Naive thymus-derived CD4-positive, alpha-beta T cell (primary cell): ENCODE measurements at regions of chr17 and their contacts with region 1.

Region 1: DNA sequence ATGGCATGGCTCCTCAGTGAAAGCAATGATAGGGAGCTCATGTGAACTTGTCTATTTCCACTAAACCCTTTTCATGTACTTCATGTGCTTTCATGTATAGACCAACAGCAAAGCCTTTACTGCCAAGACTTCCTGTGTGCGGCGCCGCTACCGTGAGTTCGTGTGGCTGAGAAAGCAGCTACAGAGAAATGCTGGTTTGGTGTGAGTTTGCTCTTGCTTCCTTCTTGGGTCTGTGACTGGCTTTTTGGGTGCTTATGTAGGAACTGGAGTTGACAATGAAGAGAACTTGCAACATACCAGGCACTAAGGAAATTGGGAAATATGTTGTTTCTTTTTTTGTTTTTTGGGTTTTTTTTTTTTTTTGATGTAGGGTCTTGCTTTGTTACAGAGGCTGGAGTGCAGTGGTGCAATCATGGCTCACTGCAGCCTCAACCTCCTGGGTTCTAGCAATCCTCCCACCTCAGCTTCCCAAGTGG is 5.7 kb downstream of the SNX11 start:
- DNase-seq: peak; percentile 32 to 77 (median 64)
- ATAC-seq: peak; percentile 90
- H3K4me3 ChIP-seq: peak overlapping the region; percentile 37
- H3K4me3 Mint-ChIP-seq: peak overlapping the region; percentile 55 to 82 (median 70)
- H3K27ac ChIP-seq: no peak overlapping the region
- H3K27ac Mint-ChIP-seq: peak overlapping the region; percentile 84 to 97 (median 90)
- H3K4me1 ChIP-seq: peaks cover 18 to 29% of the 10 kb centered on the region in 2 donors
- H3K4me1 Mint-ChIP-seq: peaks cover 39 to 48% (median 41%) of the 10 kb centered on the region in 7 donors
- H3K27me3 ChIP-seq: no peaks in the 10 kb centered on the region
- H3K27me3 Mint-ChIP-seq: no peaks in the 10 kb centered on the region

Region 2: GRCh38 chr17:48084932-48085444 is 28.3 kb before region 1 on chr17:
- CTCF ChIA-PET with region 1: interaction called, 12 read pairs
- POLR2A ChIA-PET with region 1: interaction called, 5 read pairs
- intact Hi-C with region 1: loop called in 1 of 2 experiments (anchors 1 kb)
- DNase-seq: no peak
- ATAC-seq: no peak
- H3K4me3 ChIP-seq: no peak overlapping the region
- H3K4me3 Mint-ChIP-seq: no peak overlapping the region
- H3K27ac ChIP-seq: no peak overlapping the region
- H3K27ac Mint-ChIP-seq: no peak overlapping the region
- H3K4me1 ChIP-seq: no peaks in the 10 kb centered on the region
- H3K4me1 Mint-ChIP-seq: peaks cover 0 to 20% (median 10%) of the 10 kb centered on the region in 7 donors
- H3K27me3 ChIP-seq: no peaks in the 10 kb centered on the region
- H3K27me3 Mint-ChIP-seq: no peaks in the 10 kb centered on the region

Region 3: DNA sequence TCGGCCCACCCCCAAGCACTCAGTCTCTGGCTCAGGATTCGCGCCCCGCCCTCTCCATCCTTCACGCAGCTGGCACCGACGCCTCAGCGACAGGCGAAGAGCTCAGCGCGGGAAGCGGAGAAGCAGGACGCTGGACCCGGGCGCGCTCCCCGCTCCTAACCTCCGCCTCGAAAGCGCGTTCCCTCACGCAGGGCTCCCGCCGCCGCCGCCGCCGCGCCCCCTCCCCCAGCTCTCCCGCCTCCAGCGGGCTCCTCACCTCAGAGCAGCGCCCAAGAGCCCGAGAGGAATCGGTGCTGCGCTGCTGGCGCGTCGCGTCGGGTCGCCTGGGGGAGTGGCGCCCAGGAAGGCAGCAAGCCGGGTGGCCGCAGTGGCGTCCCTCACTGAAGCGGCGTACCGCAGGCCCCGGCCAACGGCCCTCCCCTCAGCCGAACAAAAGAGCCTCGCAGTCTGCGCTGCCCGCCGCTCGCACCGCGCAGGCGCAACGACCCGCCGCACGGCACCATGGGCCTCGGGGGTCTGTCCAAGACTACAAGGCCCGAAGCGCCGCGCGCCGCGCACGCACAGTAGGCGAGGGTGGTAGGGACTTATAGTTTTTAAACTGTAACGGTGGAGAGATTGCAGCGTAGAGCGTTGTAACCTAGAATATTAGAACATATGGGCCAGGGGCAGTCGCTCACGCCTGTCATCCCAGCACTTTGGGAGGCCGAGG is 12.1 kb before region 1 on chr17 and contains the start of gene CBX1:
- CTCF ChIA-PET with region 1: interaction called, 3 read pairs
- POLR2A ChIA-PET with region 1: interaction called, 10 read pairs
- intact Hi-C with region 1: loop called in 1 of 2 experiments (anchors 2 kb)
- DNase-seq: peak; percentile 87 to 95 (median 93)
- ATAC-seq: peak; percentile 98
- H3K4me3 ChIP-seq: peak within 1 kb of the TSS; percentile 78
- H3K4me3 Mint-ChIP-seq: peak within 1 kb of the TSS; percentile 83 to 95 (median 91)
- H3K27ac ChIP-seq: peak within 1 kb of the TSS; percentile 68
- H3K27ac Mint-ChIP-seq: peak within 1 kb of the TSS; percentile 78 to 94 (median 89)
- H3K4me1 ChIP-seq: peaks cover 6 to 11% of the 10 kb centered on the region in 2 donors
- H3K4me1 Mint-ChIP-seq: peaks cover 17 to 60% (median 54%) of the 10 kb centered on the region in 7 donors
- H3K27me3 ChIP-seq: no peaks in the 10 kb centered on the region
- H3K27me3 Mint-ChIP-seq: no peaks in the 10 kb centered on the region
- total RNA-seq, gene CBX1: 16.4 to 56.7 (median 33.5) TPM

Region 4: GRCh38 chr17:48131216-48131824 is 18.1 kb after region 1 on chr17:
- CTCF ChIA-PET with region 1: interaction called, 13 read pairs
- POLR2A ChIA-PET with region 1: no interaction called
- intact Hi-C with region 1: loop called in 1 of 2 experiments (anchors 1 kb)
- DNase-seq: peak in 8 of 9 donors; percentile 21 to 64 (median 56)
- ATAC-seq: peak; percentile 91
- H3K4me3 ChIP-seq: no peak overlapping the region
- H3K4me3 Mint-ChIP-seq: no peak overlapping the region
- H3K27ac ChIP-seq: no peak overlapping the region
- H3K27ac Mint-ChIP-seq: peak overlapping the region in 5 of 9 donors; percentile 75 to 79 (median 78)
- H3K4me1 ChIP-seq: no peaks in the 10 kb centered on the region
- H3K4me1 Mint-ChIP-seq: peaks cover 0 to 4% (median 0%) of the 10 kb centered on the region in 7 donors
- H3K27me3 ChIP-seq: no peaks in the 10 kb centered on the region
- H3K27me3 Mint-ChIP-seq: no peaks in the 10 kb centered on the region